ENCODE measurements at regions of chr7 and their contacts with region 1.

Region 1: GRCh38 chr7:26398756-26399501 is 107.3 kb downstream of the SNX10 start:
- DNase-seq: peak; percentile 79 to 93 (median 91)
- H3K4me3 ChIP-seq: peak overlapping the region; percentile 46 to 83 (median 76)
- H3K27ac ChIP-seq: peak overlapping the region; percentile 66 to 85
- H3K4me1 ChIP-seq: peaks cover 5 to 40% (median 29%) of the 10 kb centered on the region in 4 experiments
- H3K27me3 ChIP-seq: no peaks in the 10 kb centered on the region

Region 2: GRCh38 chr7:26388256-26388655 is 10.7 kb before region 1 on chr7:
- CTCF ChIA-PET with region 1: interaction called, 10 read pairs
- POLR2A ChIA-PET with region 1: interaction called, 7 read pairs
- DNase-seq: peak in 2 of 3 donors; percentile 47 to 61
- H3K4me3 ChIP-seq: no peak overlapping the region
- H3K27ac ChIP-seq: no peak overlapping the region
- H3K4me1 ChIP-seq: peaks cover 0 to 2% (median 0%) of the 10 kb centered on the region in 4 experiments
- H3K27me3 ChIP-seq: no peaks in the 10 kb centered on the region

Measured in common myeloid progenitor, CD34-positive (primary cell).